H1 (cell line): ENCODE measurements at regions of chr12 and their contacts with region 1.

Region 1: DNA sequence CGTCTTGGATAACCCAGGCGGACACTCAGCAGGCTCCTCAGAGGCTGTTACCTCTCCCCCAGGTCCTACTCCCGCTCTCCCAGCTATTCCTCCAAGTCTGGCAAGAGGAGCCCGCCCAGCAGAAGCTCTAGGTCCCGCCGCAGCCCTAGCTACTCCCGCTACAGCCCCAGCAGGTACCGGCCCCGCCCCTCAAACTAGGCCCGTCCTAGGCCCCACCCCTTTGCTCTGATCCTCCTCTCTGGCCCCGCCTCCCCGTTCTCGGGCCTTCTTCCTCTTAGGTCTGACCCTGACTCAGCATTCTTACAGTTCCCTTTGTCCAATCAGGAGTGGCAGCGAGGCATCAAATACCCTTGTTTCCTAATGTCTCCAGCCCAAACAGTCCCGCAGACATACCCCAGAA is 25.3 kb upstream of the HSPB8 start:
- DNase-seq: peak; percentile 93 to 97
- H3K4me3 ChIP-seq: peak overlapping the region; percentile 68 to 81 (median 72)
- H3K27ac ChIP-seq: peak overlapping the region; percentile 94
- H3K4me1 ChIP-seq: peaks cover 0 to 6% (median 3%) of the 10 kb centered on the region in 4 experiments; a peak in 4 of 7 replicates
- H3K27me3 ChIP-seq: no peaks in the 10 kb centered on the region
- CTCF ChIP-seq: no peak
- EP300 ChIP-seq: no peak
- POLR2A ChIP-seq: peak in 1 of 2 experiments; percentile 68; a peak in 1 of 3 replicates
- RAD21 ChIP-seq: peak in 1 of 2 experiments; percentile 14; a peak in 1 of 4 replicates

Region 2: DNA sequence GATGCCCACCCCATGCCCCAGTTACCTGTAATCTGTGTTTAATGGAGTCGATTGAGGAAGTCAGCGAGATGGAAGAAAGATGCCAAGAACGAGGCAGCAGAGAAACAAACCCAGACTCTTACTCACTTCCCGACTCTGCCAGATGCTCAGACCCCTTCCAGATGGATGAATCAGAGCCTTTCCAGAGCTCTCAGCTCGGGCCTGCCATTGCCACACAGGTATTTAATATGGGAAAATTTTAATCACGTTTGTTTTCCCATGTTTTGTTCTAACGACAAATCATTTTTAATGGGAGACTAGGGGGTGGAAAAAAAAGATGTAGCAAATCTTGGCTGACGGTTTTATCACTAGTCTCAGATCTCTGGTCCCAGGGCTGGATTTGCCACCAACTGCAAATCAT is 244.7 kb before region 1 on chr12:
- CTCF ChIA-PET with region 1: no interaction called
- POLR2A ChIA-PET with region 1: no interaction called
- DNase-seq: no peak
- H3K4me3 ChIP-seq: no peak overlapping the region
- H3K27ac ChIP-seq: no peak overlapping the region
- H3K4me1 ChIP-seq: no peaks in the 10 kb centered on the region
- H3K27me3 ChIP-seq: no peaks in the 10 kb centered on the region
- CTCF ChIP-seq: no peak
- EP300 ChIP-seq: no peak
- POLR2A ChIP-seq: no peak
- RAD21 ChIP-seq: no peak

Region 3: DNA sequence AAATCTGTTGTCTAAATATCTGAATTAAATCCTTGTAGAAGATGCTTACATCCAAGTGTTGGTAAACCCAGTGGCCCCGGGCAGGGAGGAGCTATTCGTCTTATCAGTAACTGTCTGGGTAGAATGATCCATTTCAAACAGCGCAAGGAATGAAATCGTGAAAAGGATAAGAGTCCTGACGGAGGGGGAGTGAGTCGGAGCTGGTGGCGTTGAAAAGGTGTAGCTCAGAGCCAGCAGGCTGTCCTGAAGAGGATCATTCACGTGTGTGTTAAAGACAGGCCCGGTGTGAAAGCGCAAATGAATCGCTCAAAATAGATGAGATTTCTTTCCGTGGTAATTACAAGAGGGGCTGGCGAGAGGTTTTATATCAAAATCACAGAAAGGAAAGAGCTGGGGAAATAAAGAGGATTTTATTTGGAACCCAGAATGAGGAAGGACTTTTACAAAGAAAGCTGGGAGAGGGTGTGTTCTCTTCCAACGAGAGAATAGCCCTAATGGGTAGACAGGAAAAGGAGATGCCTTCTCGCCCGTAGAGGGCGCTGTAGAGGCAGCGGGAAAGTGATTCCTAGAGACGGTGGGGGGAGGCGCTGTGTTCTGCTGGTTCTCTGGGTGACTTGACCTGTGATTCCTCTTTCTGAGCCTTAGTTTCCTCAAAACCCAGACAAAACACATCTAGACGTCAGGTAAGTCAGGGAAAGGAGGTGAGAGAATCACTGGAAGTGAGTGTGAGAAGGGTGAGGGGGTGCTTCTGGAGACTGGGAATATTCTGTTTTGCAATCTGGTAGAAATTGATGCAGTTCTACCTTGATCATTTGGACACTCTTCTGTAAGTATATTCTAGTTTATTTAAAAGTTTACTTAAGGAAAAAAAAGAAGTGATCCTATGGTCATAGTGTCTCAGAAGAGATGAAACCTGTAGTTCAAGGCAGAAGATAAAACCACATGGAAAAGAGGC is 132.8 kb before region 1 on chr12:
- CTCF ChIA-PET with region 1: interaction called, 10 read pairs
- POLR2A ChIA-PET with region 1: no interaction called
- DNase-seq: peak; percentile 54 to 94
- H3K4me3 ChIP-seq: peak overlapping the region in 1 of 4 experiments; percentile 31; a peak in 1 of 8 replicates
- H3K27ac ChIP-seq: no peak overlapping the region
- H3K4me1 ChIP-seq: peaks cover 6 to 26% (median 17%) of the 10 kb centered on the region in 4 experiments; a peak in 6 of 7 replicates
- H3K27me3 ChIP-seq: no peaks in the 10 kb centered on the region
- CTCF ChIP-seq: peak; percentile 93 to 99 (median 98)
- EP300 ChIP-seq: no peak
- POLR2A ChIP-seq: no peak
- RAD21 ChIP-seq: peak; percentile 82

Region 4: GRCh38 chr12:119117941-119118340 is 35.5 kb before region 1 on chr12:
- CTCF ChIA-PET with region 1: interaction called, 14 read pairs
- POLR2A ChIA-PET with region 1: interaction called, 13 read pairs
- DNase-seq: no peak
- H3K4me3 ChIP-seq: no peak overlapping the region
- H3K27ac ChIP-seq: no peak overlapping the region
- H3K4me1 ChIP-seq: 0 out of 7 replicates have a peak, but pooled peaks cover 0 to 2% (median 0%) of the 10 kb centered on the region in 4 experiments
- H3K27me3 ChIP-seq: no peaks in the 10 kb centered on the region
- CTCF ChIP-seq: no peak
- EP300 ChIP-seq: no peak
- POLR2A ChIP-seq: no peak
- RAD21 ChIP-seq: no peak

Region 5: GRCh38 chr12:119136811-119137410 is 16.6 kb before region 1 on chr12:
- CTCF ChIA-PET with region 1: interaction called, 16 read pairs
- POLR2A ChIA-PET with region 1: interaction called, 22 read pairs
- DNase-seq: no peak
- H3K4me3 ChIP-seq: no peak overlapping the region
- H3K27ac ChIP-seq: no peak overlapping the region
- H3K4me1 ChIP-seq: no peaks in the 10 kb centered on the region
- H3K27me3 ChIP-seq: no peaks in the 10 kb centered on the region
- CTCF ChIP-seq: no peak
- EP300 ChIP-seq: no peak
- POLR2A ChIP-seq: no peak
- RAD21 ChIP-seq: no peak

Region 6: GRCh38 chr12:119176267-119176849 is 22.9 kb after region 1 on chr12:
- CTCF ChIA-PET with region 1: interaction called, 12 read pairs
- POLR2A ChIA-PET with region 1: interaction called, 24 read pairs
- DNase-seq: peak in 1 of 2 experiments; percentile 51
- H3K4me3 ChIP-seq: no peak overlapping the region
- H3K27ac ChIP-seq: no peak overlapping the region; the same call in 1 of the 2 replicates
- H3K4me1 ChIP-seq: peaks cover 13 to 36% (median 21%) of the 10 kb centered on the region in 4 experiments
- H3K27me3 ChIP-seq: no peaks in the 10 kb centered on the region; a peak in 1 of 7 replicates
- CTCF ChIP-seq: no peak
- EP300 ChIP-seq: no peak
- POLR2A ChIP-seq: no peak
- RAD21 ChIP-seq: no peak

Region 7: GRCh38 chr12:119183094-119183493 is 29.6 kb after region 1 on chr12:
- CTCF ChIA-PET with region 1: interaction called, 7 read pairs
- POLR2A ChIA-PET with region 1: interaction called, 24 read pairs
- DNase-seq: no peak
- H3K4me3 ChIP-seq: no peak overlapping the region
- H3K27ac ChIP-seq: no peak overlapping the region
- H3K4me1 ChIP-seq: peaks cover 14 to 24% (median 17%) of the 10 kb centered on the region in 4 experiments
- H3K27me3 ChIP-seq: no peaks in the 10 kb centered on the region; a peak in 1 of 7 replicates
- CTCF ChIP-seq: no peak
- EP300 ChIP-seq: no peak
- POLR2A ChIP-seq: no peak
- RAD21 ChIP-seq: no peak

Region 8: DNA sequence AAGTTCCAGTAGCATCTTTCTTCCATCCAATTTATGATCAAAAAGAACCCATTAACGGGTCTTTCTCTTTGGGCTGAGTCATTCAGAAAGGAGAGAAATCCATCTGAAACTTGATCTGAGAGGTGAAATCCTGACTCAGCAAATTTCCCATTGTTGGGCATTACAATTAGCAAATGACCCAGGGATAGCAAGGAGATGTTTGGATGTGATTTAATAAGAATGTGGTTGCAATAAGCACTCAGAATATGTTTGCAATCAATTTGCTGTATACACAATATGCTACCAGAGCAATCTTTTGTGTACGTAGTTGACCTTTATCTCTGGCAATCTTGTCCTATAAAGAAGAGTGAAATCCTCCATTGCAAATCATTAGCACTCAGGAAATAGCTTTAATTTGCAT is 303.8 kb after region 1 on chr12:
- CTCF ChIA-PET with region 1: no interaction called
- POLR2A ChIA-PET with region 1: no interaction called
- DNase-seq: no peak
- H3K4me3 ChIP-seq: no peak overlapping the region
- H3K27ac ChIP-seq: no peak overlapping the region
- H3K4me1 ChIP-seq: peaks cover 0 to 6% (median 0%) of the 10 kb centered on the region in 4 experiments; a peak in 1 of 7 replicates
- H3K27me3 ChIP-seq: peaks cover 0 to 2% (median 0%) of the 10 kb centered on the region in 4 experiments; a peak in 1 of 7 replicates
- CTCF ChIP-seq: no peak
- EP300 ChIP-seq: no peak
- POLR2A ChIP-seq: no peak
- RAD21 ChIP-seq: no peak